ENCODE measurements at regions of chr2 and their contacts with region 1.

Region 1: GRCh38 chr2:212177724-212178123 is 360.9 kb downstream of the ERBB4 start:
- DNase-seq: peak; percentile 13
- H3K4me3 ChIP-seq: no peak overlapping the region
- H3K27ac ChIP-seq: no peak overlapping the region
- H3K4me1 ChIP-seq: peaks cover 15% of the 10 kb centered on the region
- H3K27me3 ChIP-seq: no peaks in the 10 kb centered on the region
- CTCF ChIP-seq: no peak
- POLR2A ChIP-seq: no peak

Region 2: GRCh38 chr2:211611061-211611518 is 566.6 kb before region 1 on chr2:
- CTCF ChIA-PET with region 1: no interaction called
- POLR2A ChIA-PET with region 1: no interaction called
- dilution Hi-C with region 1: no loop called
- intact Hi-C with region 1: no loop called
- DNase-seq: no peak
- H3K4me3 ChIP-seq: no peak overlapping the region
- H3K27ac ChIP-seq: no peak overlapping the region
- H3K4me1 ChIP-seq: no peaks in the 10 kb centered on the region
- H3K27me3 ChIP-seq: no peaks in the 10 kb centered on the region
- CTCF ChIP-seq: no peak
- POLR2A ChIP-seq: no peak

Region 3: GRCh38 chr2:212147921-212148513 is 29.7 kb before region 1 on chr2:
- CTCF ChIA-PET with region 1: interaction called, 8 read pairs
- POLR2A ChIA-PET with region 1: no interaction called
- dilution Hi-C with region 1: no loop called
- intact Hi-C with region 1: loop called (anchors 2 kb)
- DNase-seq: peak; percentile 39
- H3K4me3 ChIP-seq: no peak overlapping the region
- H3K27ac ChIP-seq: no peak overlapping the region
- H3K4me1 ChIP-seq: no peaks in the 10 kb centered on the region
- H3K27me3 ChIP-seq: no peaks in the 10 kb centered on the region
- CTCF ChIP-seq: peak; percentile 19 to 21
- POLR2A ChIP-seq: no peak